Activated T-helper 1 cell treated with anti-CD3 and anti-CD28 coated beads, Interleukin-12 subunit alpha, Interleukin-12 subunit beta, Interleukin-2, Interleukin-4 antibody, amounts not matched to agents 30 ng/mL and 10 ng/mL and 1 ng/mL, durations not matched to agents 14 hours and 24 hours and 36 hours (primary cell): ENCODE measurements at regions of chr3 and their contacts with region 1.

Region 1: DNA sequence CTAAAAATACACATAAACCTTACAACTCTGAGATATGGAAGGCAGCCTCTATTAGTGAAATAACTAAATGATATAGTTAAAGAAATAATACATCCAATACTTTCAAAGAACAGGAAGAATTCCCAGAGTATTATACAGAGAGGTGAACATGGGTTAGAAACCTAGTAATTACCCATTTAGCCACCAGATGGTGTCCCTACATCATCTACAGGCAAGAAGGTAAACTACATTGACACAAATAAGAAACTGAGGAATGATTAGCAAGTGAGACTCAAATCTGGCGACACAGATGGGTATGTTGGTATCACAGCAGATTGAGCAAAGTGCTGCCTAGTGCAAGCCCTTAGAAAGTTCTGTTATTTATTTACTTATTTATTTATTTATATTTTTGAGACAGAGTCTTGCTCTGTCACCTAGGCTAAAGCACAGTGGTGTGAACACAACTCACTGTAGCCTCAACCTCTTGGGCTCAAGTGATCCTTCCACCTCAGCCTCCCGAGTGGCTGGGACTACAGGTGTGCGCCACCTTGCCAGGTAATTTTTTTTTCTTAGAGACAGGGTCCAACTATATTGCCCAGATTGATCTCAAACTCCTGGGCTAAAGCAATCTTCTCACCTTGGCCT is 28.2 kb downstream of the NEK4 start:
- DNase-seq: no peak
- H3K4me3 Mint-ChIP-seq: no peak overlapping the region
- H3K27ac Mint-ChIP-seq: no peak overlapping the region
- H3K4me1 Mint-ChIP-seq: no peaks in the 10 kb centered on the region
- H3K27me3 Mint-ChIP-seq: no peaks in the 10 kb centered on the region

Region 2: GRCh38 chr3:52498137-52499054 is 244.1 kb before region 1 on chr3:
- intact Hi-C with region 1: no loop called
- DNase-seq: no peak
- H3K4me3 Mint-ChIP-seq: no peak overlapping the region
- H3K27ac Mint-ChIP-seq: no peak overlapping the region
- H3K4me1 Mint-ChIP-seq: no peaks in the 10 kb centered on the region
- H3K27me3 Mint-ChIP-seq: no peaks in the 10 kb centered on the region

Region 3: GRCh38 chr3:52685709-52686691 is 56.5 kb before region 1 on chr3 and contains the starts of genes GNL3 and PBRM1:
- intact Hi-C with region 1: no loop called
- DNase-seq: peak; percentile 93
- H3K4me3 Mint-ChIP-seq: peak within 1 kb of the TSS; percentile 98
- H3K27ac Mint-ChIP-seq: peak within 1 kb of the TSS; percentile 99
- H3K4me1 Mint-ChIP-seq: peaks cover 75% of the 10 kb centered on the region
- H3K27me3 Mint-ChIP-seq: no peaks in the 10 kb centered on the region
- total RNA-seq, gene GNL3: 241 and 245 TPM in 2 replicates
- total RNA-seq, gene PBRM1: 68.6 and 68.8 TPM in 2 replicates

Region 4: DNA sequence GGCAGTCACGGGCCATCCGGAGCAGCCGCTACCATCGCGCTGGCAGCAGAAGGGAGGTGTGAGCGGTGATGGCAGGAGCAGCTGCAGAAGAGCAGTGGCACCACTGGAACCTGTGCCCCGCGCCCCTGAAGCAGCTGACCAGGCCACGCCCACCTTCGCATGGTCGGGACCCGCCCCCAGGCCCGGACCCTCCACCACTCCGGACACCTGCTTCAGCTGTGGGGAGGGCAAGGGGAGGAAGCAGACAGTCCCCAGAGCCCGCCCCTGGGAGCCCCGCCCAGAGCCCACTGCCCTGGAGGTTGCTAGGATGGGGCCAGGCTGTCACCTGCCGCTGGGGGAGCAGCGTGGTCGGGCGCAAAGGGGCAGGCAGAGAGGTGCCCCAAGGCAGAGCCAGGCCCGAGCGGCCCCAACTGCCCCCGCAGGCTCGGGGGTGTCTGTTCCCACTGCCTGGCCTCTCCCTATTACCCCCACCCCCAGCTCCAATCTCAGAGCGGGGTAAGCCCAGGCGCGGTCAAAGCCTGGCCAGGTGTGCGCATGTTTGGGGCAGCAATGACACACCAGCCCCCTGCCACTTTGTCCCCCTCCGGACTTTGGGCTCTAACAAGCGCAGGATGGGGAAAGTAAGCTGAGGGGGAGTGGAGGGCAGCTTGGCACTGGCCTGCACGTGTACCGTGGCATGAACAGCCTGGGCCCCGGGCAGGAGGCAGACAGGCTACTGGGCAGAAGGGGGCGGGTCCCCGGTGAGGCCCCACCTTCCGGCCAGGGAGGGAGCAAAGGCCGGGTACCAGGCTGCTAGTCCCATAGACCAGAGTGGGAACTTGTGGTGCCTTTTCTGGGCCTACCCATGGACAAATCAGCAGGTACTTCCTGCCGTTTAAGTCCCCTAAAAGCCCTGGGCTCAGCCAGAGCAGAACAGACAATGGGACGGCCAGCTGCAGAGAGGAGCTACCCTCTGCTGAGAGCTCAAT is 27.9 kb before region 1 on chr3:
- intact Hi-C with region 1: no loop called
- DNase-seq: no peak
- H3K4me3 Mint-ChIP-seq: no peak overlapping the region
- H3K27ac Mint-ChIP-seq: no peak overlapping the region
- H3K4me1 Mint-ChIP-seq: no peaks in the 10 kb centered on the region
- H3K27me3 Mint-ChIP-seq: no peaks in the 10 kb centered on the region

Region 5: DNA sequence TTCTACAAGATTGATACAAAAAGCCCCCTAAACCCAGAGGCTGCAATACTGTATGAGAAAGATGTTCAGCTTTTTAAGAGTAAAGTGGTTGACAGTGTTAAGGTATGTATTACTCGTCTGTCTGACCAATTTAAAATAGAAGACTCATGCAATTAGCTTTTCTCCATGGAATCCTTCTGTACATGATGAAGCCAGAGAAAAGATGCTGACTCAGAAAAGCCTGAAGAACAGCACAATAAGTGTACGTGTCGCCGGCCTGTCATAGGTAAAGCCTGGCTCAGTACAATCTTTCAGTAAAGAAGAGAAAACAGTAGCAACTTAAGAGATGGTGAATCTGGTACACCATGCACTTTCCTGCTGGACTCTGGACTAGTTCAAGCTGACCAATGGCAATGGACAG is 11.8 kb after region 1 on chr3:
- intact Hi-C with region 1: no loop called
- DNase-seq: no peak
- H3K4me3 Mint-ChIP-seq: no peak overlapping the region
- H3K27ac Mint-ChIP-seq: no peak overlapping the region
- H3K4me1 Mint-ChIP-seq: peaks cover 2% of the 10 kb centered on the region
- H3K27me3 Mint-ChIP-seq: no peaks in the 10 kb centered on the region

Region 6: DNA sequence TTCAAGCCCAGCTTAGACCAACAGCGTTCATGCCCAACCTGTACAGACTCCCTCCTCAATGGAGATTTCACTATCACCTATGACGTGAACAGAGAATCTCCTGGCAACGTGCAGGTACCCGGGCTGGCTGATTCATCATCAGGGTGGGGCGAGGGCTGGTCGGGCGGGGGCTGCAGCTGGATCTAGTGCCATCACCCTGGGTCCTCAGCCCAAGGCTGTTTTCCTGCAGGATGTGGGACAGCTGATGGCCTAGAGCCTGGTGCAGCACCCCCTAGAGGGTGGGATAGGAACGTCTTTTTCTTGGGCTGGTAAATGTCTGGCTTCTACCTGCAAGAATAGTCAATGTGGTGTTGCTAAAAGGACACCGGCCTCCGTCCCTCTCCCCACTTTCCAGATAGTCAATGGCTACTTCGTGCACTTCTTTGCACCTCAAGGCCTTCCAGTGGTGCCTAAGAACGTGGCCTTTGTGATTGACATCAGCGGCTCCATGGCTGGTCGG is 56.5 kb after region 1 on chr3:
- intact Hi-C with region 1: loop called (anchors 1 kb)
- DNase-seq: no peak
- H3K4me3 Mint-ChIP-seq: no peak overlapping the region
- H3K27ac Mint-ChIP-seq: no peak overlapping the region
- H3K4me1 Mint-ChIP-seq: no peaks in the 10 kb centered on the region
- H3K27me3 Mint-ChIP-seq: peaks cover 3% of the 10 kb centered on the region

Region 7: GRCh38 chr3:52820736-52821135 is 78.2 kb after region 1 on chr3:
- intact Hi-C with region 1: loop called (anchors 5 kb)
- DNase-seq: no peak
- H3K4me3 Mint-ChIP-seq: no peak overlapping the region
- H3K27ac Mint-ChIP-seq: no peak overlapping the region
- H3K4me1 Mint-ChIP-seq: no peaks in the 10 kb centered on the region
- H3K27me3 Mint-ChIP-seq: no peaks in the 10 kb centered on the region

Region 8: DNA sequence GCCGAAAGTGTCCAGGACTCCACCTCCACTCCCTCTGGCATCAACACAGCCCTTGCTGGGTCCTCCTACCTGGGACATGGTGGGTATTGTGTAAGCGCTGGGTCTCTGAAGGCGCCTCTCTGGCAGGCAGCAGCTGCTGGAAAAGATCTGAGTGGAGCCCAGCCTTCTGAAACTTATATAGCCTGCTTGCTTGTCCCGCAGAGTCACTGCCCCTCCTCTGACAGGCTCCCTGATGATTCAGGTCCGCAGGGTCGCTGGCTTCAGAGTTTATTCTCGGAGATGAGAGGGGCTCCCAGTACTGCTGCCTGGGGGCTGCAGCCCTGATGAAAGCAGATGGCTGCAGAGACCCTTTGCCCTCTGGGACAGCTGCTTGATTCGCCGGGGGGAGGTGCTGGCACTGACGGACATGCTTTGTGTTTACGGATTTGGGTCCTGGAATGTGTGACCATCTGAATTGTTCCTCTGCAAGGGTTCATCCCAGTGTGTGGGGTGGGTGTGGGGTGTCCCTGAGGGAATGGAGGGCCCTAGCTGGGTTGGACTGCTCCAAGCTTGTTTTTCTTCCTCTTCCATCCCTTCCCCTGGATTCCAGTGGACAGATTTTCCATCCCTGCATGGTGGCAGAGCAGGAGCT is 92.5 kb after region 1 on chr3 and contains the start of gene MUSTN1:
- intact Hi-C with region 1: loop called (anchors 5 kb)
- DNase-seq: no peak
- H3K4me3 Mint-ChIP-seq: no peak within 1 kb of the TSS
- H3K27ac Mint-ChIP-seq: no peak within 1 kb of the TSS
- H3K4me1 Mint-ChIP-seq: peaks cover 27% of the 10 kb centered on the region
- H3K27me3 Mint-ChIP-seq: no peaks in the 10 kb centered on the region
- total RNA-seq, gene MUSTN1: 1.7 TPM in 1 of 2 replicates, not detected in the other

Region 9: DNA sequence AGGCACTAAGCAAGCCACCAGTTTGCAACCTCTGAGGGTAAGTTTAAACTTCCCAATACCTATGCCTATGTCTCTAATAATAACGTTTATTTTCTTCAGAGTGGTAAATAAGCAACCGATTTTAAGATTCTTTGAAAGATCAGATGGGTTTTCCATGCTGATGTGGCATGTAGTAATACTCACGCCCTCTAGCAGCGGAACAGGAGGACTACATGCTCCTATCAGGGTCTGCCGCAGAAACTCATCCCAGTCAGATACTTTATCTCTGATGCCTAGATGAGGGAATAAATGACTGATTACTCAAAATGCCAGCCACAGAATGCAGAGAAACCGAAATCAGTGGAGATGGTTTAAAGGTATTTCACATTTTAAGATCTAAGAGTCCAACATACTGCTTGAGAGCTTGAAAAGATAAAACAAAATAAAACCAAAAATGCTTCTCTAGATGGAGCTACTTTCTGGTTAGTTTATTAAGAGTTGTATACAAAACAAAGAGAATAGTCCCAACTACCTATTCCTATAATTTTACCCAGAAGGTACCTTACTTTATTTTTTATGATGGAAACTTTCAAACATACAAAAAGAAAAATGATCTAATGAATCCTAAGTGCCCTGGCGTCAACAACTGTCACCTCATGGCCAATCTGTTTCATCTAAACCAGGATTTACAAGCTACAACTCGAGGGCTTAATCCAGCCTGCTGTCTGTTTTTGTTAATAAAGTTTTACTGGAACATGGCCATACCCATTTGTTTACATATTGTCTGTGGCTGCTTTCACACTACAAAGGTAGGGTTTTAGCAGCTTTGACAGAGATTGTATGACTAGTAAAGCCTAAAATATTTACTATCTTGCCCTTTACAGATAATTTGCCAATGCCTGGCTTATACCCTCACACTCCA is 192.3 kb after region 1 on chr3:
- intact Hi-C with region 1: loop called (anchors 2 kb)
- DNase-seq: peak; percentile 16
- H3K4me3 Mint-ChIP-seq: no peak overlapping the region
- H3K27ac Mint-ChIP-seq: peak overlapping the region; percentile 35
- H3K4me1 Mint-ChIP-seq: peaks cover 9% of the 10 kb centered on the region
- H3K27me3 Mint-ChIP-seq: no peaks in the 10 kb centered on the region